B cell (primary cell): ENCODE measurements at regions of chr6 and their contacts with region 1.

Region 1: GRCh38 chr6:25992413-25993037 is 29.9 kb downstream of the TRIM38 start:
- DNase-seq: peak; percentile 97
- ATAC-seq: peak; percentile 87
- H3K4me3 ChIP-seq: peak overlapping the region; percentile 49 to 80 (median 72)
- H3K4me3 Mint-ChIP-seq: peak overlapping the region; percentile 99
- H3K27ac ChIP-seq: peak overlapping the region; percentile 84 to 94
- H3K27ac Mint-ChIP-seq: peak overlapping the region; percentile 100
- H3K4me1 ChIP-seq: peaks cover 11 to 20% of the 10 kb centered on the region in 2 donors
- H3K4me1 Mint-ChIP-seq: peaks cover 47% of the 10 kb centered on the region
- H3K27me3 ChIP-seq: no peaks in the 10 kb centered on the region
- H3K27me3 Mint-ChIP-seq: no peaks in the 10 kb centered on the region
- CTCF ChIP-seq: peak; percentile 99

Region 2: GRCh38 chr6:25682324-25682723 is 310.2 kb before region 1 on chr6:
- CTCF ChIA-PET with region 1: no interaction called
- POLR2A ChIA-PET with region 1: no interaction called
- intact Hi-C with region 1: no loop called
- DNase-seq: no peak
- ATAC-seq: no peak
- H3K4me3 ChIP-seq: no peak overlapping the region
- H3K4me3 Mint-ChIP-seq: no peak overlapping the region
- H3K27ac ChIP-seq: no peak overlapping the region
- H3K27ac Mint-ChIP-seq: no peak overlapping the region
- H3K4me1 ChIP-seq: no peaks in the 10 kb centered on the region
- H3K4me1 Mint-ChIP-seq: no peaks in the 10 kb centered on the region
- H3K27me3 ChIP-seq: peaks cover 0 to 14% (median 2%) of the 10 kb centered on the region in 4 experiments
- H3K27me3 Mint-ChIP-seq: peaks cover 31% of the 10 kb centered on the region
- CTCF ChIP-seq: no peak

Region 3: DNA sequence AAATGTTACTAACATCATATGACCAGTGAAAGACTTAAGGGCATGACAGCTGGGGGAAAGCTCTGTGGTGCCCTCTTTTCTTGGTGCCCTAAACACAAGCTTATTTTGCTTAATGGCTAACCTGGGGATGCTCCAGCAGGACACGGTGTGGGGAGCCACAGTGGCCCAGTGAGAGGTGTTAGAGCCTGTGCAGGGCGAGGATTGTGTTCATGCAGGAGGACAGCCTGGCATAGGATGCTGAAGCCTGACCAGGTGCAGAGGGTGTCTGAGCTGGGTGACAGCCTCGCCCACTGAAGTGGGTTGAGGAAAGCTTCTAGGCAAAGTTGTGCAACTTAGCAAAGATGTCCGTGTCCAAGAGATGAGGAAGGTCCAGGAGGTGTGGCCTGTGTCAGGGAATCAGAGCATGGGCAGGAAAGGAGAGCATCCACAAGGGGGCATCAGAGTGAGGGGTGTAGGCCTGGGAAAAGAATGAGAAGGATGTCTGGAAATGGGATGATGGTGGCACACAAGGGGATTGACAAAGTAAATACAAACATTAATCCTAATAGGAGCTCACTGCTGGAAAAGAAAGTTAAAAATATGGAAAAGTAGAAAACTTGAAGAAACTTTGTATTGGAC is 204.1 kb before region 1 on chr6:
- CTCF ChIA-PET with region 1: interaction called, 31 read pairs
- POLR2A ChIA-PET with region 1: no interaction called
- intact Hi-C with region 1: no loop called
- DNase-seq: peak; percentile 57
- ATAC-seq: peak; percentile 49
- H3K4me3 ChIP-seq: no peak overlapping the region
- H3K4me3 Mint-ChIP-seq: no peak overlapping the region
- H3K27ac ChIP-seq: no peak overlapping the region
- H3K27ac Mint-ChIP-seq: no peak overlapping the region
- H3K4me1 ChIP-seq: no peaks in the 10 kb centered on the region
- H3K4me1 Mint-ChIP-seq: no peaks in the 10 kb centered on the region
- H3K27me3 ChIP-seq: no peaks in the 10 kb centered on the region
- H3K27me3 Mint-ChIP-seq: peaks cover 5% of the 10 kb centered on the region
- CTCF ChIP-seq: peak; percentile 60

Region 4: DNA sequence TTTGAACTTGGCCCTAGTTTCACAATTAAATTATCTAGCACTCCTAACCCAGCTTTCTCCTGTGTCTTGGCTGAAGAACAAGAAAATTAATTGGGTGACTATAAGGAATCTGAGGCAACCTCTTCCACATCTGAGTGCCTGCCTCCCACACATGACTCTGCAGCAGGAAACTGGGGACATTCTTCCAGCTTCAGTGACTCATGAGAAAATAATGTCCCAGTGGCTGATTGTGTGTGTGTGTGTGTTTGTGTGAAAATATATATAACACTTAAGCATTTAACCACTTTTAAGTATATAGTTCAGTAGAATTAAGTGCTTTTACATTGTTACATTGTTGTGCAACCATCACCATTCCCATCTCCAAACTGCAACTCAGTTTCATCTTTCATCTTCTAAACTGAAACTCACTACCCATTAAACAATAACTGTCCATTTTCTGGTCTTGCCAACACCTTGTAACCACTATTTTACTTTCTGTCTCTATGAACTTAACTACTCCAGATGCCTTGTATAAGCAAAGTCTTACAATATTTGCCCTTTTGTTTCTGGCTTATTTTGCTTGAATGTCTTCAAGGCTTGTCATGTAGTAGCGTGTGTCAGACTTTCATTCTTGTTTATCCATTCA is 21.2 kb before region 1 on chr6:
- CTCF ChIA-PET with region 1: interaction called, 19 read pairs
- POLR2A ChIA-PET with region 1: interaction called, 8 read pairs
- intact Hi-C with region 1: no loop called
- DNase-seq: no peak
- ATAC-seq: no peak
- H3K4me3 ChIP-seq: no peak overlapping the region
- H3K4me3 Mint-ChIP-seq: no peak overlapping the region
- H3K27ac ChIP-seq: peak overlapping the region in 1 of 2 donors; percentile 29
- H3K27ac Mint-ChIP-seq: peak overlapping the region; percentile 63
- H3K4me1 ChIP-seq: peaks cover 32 to 52% of the 10 kb centered on the region in 2 donors
- H3K4me1 Mint-ChIP-seq: peaks cover 84% of the 10 kb centered on the region
- H3K27me3 ChIP-seq: no peaks in the 10 kb centered on the region
- H3K27me3 Mint-ChIP-seq: no peaks in the 10 kb centered on the region
- CTCF ChIP-seq: no peak

Region 5: GRCh38 chr6:26020329-26021000 is 27.9 kb after region 1 on chr6:
- CTCF ChIA-PET with region 1: interaction called, 47 read pairs
- POLR2A ChIA-PET with region 1: interaction called, 61 read pairs
- intact Hi-C with region 1: loop called (anchors 1 kb)
- DNase-seq: peak; percentile 95
- ATAC-seq: peak; percentile 53
- H3K4me3 ChIP-seq: peak overlapping the region; percentile 81 to 92 (median 88)
- H3K4me3 Mint-ChIP-seq: peak overlapping the region; percentile 99
- H3K27ac ChIP-seq: peak overlapping the region; percentile 94 to 99
- H3K27ac Mint-ChIP-seq: peak overlapping the region; percentile 100
- H3K4me1 ChIP-seq: peaks cover 9 to 24% of the 10 kb centered on the region in 2 donors
- H3K4me1 Mint-ChIP-seq: peaks cover 34% of the 10 kb centered on the region
- H3K27me3 ChIP-seq: no peaks in the 10 kb centered on the region
- H3K27me3 Mint-ChIP-seq: no peaks in the 10 kb centered on the region
- CTCF ChIP-seq: no peak